ENCODE measurements at regions of chr1 and their contacts with region 1.

Region 1: GRCh38 chr1:163174524-163175437 is 27.9 kb downstream of the RGS5 start:
- DNase-seq: peak; percentile 77

Region 2: GRCh38 chr1:162854245-162854882 is 320.4 kb before region 1 on chr1:
- intact Hi-C with region 1: loop called (anchors 5 kb)
- DNase-seq: no peak

Region 3: DNA sequence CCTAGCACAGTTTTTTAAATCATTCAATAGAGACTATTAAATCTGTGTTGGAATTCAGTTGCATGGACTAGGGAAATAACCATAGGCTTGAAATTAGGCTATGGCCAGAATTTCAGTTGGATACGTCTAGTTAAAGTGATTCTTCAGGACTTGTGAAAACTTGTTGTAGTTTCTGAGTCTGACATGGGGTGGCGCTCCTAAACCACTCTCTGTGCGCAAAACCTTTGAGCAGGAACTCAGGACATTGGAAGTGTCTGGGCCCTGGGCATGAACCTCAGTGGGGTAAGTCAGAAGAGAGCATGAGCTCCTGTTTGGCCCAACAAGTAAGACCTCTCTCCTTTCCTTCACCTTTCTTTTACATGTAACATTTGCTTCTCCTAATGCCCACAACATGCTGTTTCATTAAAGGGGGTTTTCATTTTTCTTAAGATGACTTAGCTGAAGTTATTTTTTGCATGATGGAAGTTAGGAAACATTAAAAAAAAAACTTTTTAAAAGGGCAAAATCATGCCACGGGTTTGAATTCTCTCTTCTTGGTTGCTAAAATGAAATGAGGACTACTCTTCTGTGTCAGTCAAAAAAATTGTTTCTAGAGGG is 296.7 kb before region 1 on chr1:
- intact Hi-C with region 1: loop called (anchors 1 kb)
- DNase-seq: no peak

Region 4: GRCh38 chr1:163046071-163046470 is 128.7 kb before region 1 on chr1:
- intact Hi-C with region 1: no loop called
- DNase-seq: no peak

Region 5: DNA sequence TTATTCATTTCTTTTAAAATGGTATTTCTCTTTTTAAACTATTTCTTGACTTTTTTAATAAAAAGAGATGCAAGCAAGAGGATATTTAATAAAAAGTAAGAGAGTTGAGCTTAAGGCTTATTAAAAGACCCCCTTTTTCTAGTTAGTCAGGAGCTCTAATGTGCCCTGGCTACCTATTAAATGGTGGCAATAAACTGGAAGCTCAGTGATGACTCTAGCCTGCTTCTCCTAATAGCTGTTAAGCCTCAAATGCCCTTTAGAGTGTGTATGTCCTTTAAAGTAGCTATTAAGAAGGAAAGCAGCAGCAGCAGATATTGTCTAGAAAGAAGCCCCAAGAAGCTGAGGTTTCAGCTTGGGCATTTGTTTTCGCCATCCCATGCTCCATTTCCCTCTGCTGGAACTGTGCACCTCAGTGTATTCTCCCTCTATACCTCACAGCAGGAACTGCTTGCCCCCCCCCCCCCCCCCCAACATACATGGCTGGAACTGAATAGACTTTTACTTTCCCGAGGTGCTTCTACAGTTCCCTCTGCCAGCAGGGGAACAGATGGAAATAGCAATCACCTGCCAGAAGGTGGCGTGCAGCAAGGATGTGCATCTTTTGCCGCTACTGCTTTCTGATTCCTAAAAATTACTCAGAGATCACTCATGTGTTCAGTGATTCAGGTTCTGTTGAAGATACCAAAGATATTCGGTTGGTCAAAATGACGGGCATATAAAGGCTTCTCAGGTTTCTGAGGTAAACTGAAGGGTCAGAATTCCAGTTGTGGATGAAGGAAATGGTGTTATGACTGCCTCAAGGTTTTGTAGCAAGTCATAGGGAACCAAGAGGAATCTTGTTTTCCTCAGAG is 103.2 kb before region 1 on chr1:
- intact Hi-C with region 1: loop called (anchors 2 kb)
- DNase-seq: no peak